Adrenal gland (tissue), 19 donors: ENCODE measurements at regions of chr3 and their contacts with region 1.

Region 1: DNA sequence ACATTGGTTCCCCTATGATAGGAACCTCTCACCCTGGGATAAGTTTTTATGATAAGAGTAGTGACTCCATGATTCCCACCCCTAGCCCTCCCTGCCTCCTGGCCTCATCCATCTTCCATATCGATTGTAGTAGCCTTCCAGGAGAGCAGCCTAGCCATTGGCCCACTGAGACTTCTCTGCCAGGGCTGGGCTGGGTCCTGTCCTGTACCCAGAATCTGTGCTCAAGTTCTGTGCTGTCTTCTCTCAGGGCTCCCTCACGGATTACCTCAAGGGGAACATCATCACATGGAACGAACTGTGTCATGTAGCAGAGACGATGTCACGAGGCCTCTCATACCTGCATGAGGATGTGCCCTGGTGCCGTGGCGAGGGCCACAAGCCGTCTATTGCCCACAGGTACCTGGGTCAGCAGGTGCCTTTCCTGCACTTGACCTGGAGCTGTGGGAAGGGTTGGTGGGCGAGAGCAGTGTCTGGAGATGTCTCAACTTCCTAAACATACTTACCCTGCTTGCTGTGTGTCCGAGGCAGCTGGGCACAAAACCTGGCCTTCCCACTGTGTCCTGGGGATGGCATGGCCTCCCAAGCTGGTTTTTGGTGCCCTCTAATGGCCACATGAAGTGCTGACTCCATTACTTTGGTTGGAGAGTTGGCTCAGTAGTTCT is 16.6 kb upstream of the EXOG start:
- DNase-seq: peak; percentile 58 to 90 (median 80)
- H3K4me3 ChIP-seq: no peak overlapping the region
- H3K27ac ChIP-seq: peak overlapping the region in 1 of 5 donors; percentile 8
- H3K4me1 ChIP-seq: no peaks in the 10 kb centered on the region
- H3K27me3 ChIP-seq: no peaks in the 10 kb centered on the region
- CTCF ChIP-seq: peak; percentile 74 to 89 (median 85)
- POLR2A ChIP-seq: no peak

Region 2: GRCh38 chr3:38117748-38118420 is 361.7 kb before region 1 on chr3:
- intact Hi-C with region 1: loop called in 1 of 2 experiments (anchors 10 kb)
- DNase-seq: peak; percentile 58 to 87 (median 78)
- H3K4me3 ChIP-seq: no peak overlapping the region
- H3K27ac ChIP-seq: no peak overlapping the region
- H3K4me1 ChIP-seq: no peaks in the 10 kb centered on the region
- H3K27me3 ChIP-seq: no peaks in the 10 kb centered on the region
- CTCF ChIP-seq: peak; percentile 42 to 83 (median 78)
- POLR2A ChIP-seq: no peak

Region 3: DNA sequence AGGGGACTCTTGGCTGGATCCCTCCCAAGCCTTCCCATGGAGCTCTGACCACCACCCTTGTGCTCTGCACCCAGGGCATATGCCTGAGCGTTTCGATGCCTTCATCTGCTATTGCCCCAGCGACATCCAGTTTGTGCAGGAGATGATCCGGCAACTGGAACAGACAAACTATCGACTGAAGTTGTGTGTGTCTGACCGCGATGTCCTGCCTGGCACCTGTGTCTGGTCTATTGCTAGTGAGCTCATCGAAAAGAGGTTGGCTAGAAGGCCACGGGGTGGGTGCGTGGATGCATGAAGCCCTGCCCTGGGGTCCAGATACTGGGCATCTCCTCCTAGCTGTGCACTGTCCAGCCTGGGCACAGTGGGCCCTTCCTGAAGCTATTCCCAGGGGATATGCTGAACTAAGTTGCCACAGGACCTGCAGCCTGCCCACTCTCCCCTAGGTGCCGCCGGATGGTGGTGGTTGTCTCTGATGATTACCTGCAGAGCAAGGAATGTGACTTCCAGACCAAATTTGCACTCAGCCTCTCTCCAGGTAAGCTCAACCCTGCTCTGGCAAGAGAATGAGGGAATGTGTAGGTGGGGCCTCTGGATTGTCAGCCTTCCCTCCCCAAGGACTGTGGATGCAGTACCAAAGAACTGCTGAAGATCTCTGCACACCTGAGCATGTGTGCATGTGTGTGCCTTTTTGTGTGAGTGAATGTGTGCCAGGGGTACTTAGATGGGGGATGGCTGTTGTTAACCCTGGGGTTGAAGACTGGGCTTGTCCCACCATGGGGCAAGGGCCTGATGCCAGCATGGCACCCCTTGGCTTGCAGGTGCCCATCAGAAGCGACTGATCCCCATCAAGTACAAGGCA is 339.0 kb before region 1 on chr3:
- intact Hi-C with region 1: loop called in 1 of 2 experiments (anchors 10 kb)
- DNase-seq: peak in 2 of 7 donors; percentile 15 to 54
- H3K4me3 ChIP-seq: no peak overlapping the region
- H3K27ac ChIP-seq: no peak overlapping the region
- H3K4me1 ChIP-seq: peaks cover 13 to 31% of the 10 kb centered on the region in 2 donors
- H3K27me3 ChIP-seq: no peaks in the 10 kb centered on the region
- CTCF ChIP-seq: no peak
- POLR2A ChIP-seq: no peak

Region 4: GRCh38 chr3:38247366-38248035 is 232.1 kb before region 1 on chr3:
- intact Hi-C with region 1: no loop called
- DNase-seq: peak; percentile 44 to 76 (median 61)
- H3K4me3 ChIP-seq: no peak overlapping the region
- H3K27ac ChIP-seq: peak overlapping the region in 2 of 5 donors; percentile 45 to 47
- H3K4me1 ChIP-seq: peaks cover 3 to 4% of the 10 kb centered on the region in 2 donors
- H3K27me3 ChIP-seq: no peaks in the 10 kb centered on the region
- CTCF ChIP-seq: peak in 5 of 6 experiments; percentile 28 to 51 (median 38)
- POLR2A ChIP-seq: no peak

Region 5: DNA sequence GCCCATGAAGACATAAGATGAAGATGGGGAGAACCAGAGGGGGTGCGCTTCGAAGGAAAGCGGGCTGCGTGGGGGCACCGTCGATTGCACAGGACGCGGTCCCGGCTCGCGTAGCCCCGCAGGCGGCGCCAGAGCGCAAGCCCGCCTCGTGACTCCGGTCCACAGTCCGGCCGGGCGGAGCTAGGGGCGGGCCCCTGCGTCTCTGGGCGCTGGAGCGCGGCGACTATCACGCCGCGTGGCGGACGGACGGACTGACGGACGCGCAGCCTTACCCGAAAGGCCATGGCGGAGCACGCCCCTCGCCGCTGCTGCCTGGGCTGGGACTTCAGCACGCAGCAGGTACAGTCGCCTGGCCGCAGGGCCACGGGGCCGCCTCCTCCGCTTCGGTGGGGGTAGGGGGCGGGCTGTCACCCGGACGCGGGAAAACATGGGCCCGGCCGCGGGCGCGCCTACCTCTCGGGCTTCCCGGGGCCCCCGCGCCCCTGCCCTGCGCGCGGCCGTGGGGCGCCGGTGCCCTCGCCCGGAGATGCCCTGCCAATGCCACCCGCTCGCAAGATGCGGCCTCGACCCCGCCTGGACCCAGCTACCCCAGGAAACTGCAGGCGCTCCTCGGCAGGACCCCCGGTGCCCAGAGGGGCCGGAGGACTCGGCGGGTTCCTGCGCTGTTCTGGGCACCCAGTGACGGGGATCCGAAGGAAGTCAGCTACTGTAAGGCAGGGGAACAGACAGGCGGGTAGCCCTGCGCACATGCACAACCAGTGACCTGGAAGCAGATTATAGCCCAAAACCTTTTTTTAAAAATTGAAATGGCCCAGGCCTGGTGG is 132.8 kb before region 1 on chr3 and contains the start of gene XYLB:
- intact Hi-C with region 1: loop called (anchors 2 to 5 kb)
- DNase-seq: peak; percentile 87 to 92 (median 88)
- H3K4me3 ChIP-seq: peak within 1 kb of the TSS; percentile 7 to 86 (median 36)
- H3K27ac ChIP-seq: peak within 1 kb of the TSS in 2 of 5 donors; percentile 15 to 58
- H3K4me1 ChIP-seq: peaks cover 0 to 5% of the 10 kb centered on the region in 2 donors
- H3K27me3 ChIP-seq: no peaks in the 10 kb centered on the region
- CTCF ChIP-seq: peak; percentile 67 to 94 (median 88)
- POLR2A ChIP-seq: peak in 1 of 2 donors; percentile 51
- total RNA-seq, gene XYLB: 2.4 to 14.9 (median 9.2) TPM

Region 6: GRCh38 chr3:38404286-38404685 is 75.3 kb before region 1 on chr3:
- intact Hi-C with region 1: loop called in 1 of 2 experiments (anchors 5 kb)
- DNase-seq: peak; percentile 64 to 93 (median 91)
- H3K4me3 ChIP-seq: no peak overlapping the region
- H3K27ac ChIP-seq: peak overlapping the region in 4 of 5 donors; percentile 13 to 53 (median 43)
- H3K4me1 ChIP-seq: peaks cover 0 to 4% of the 10 kb centered on the region in 2 donors
- H3K27me3 ChIP-seq: no peaks in the 10 kb centered on the region
- CTCF ChIP-seq: no peak
- POLR2A ChIP-seq: peak in 1 of 2 donors; percentile 58

Region 7: GRCh38 chr3:38458796-38459498 is 20.6 kb before region 1 on chr3:
- intact Hi-C with region 1: no loop called
- DNase-seq: peak; percentile 74 to 91 (median 89)
- H3K4me3 ChIP-seq: peak overlapping the region in 3 of 4 donors; percentile 27 to 61 (median 42)
- H3K27ac ChIP-seq: peak overlapping the region; percentile 47 to 94 (median 74)
- H3K4me1 ChIP-seq: peaks cover 57 to 70% of the 10 kb centered on the region in 2 donors
- H3K27me3 ChIP-seq: no peaks in the 10 kb centered on the region
- CTCF ChIP-seq: no peak
- POLR2A ChIP-seq: peak in 1 of 2 donors; percentile 84